ENCODE measurements at regions of chr1 and their contacts with region 1.

Region 1: GRCh38 chr1:213435715-213436114 is 384.7 kb downstream of the RPS6KC1 start:
- DNase-seq: no peak
- H3K4me3 ChIP-seq: no peak overlapping the region
- H3K27ac ChIP-seq: no peak overlapping the region
- H3K4me1 ChIP-seq: no peaks in the 10 kb centered on the region
- H3K27me3 ChIP-seq: peaks cover 1% of the 10 kb centered on the region
- CTCF ChIP-seq: no peak

Region 2: DNA sequence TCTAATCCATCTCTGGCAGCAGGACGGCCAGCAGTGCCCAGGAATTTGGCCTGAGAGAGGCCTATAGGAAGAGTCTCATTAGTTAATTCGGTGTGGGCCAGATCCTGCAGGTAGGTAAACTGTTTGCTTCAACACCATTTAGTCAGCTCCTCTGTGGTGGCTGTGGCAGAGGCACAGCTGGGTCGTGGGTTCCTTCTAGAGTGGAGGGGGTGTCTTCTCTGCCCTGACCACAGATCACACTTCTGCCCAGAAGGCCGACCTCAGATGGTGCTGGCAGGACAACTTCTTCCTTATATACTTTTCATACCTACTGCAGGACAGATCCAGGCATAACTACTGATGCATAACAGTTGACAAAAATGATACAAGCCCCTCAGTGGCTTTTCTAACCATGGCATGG is 103.2 kb before region 1 on chr1:
- CTCF ChIA-PET with region 1: no interaction called
- dilution Hi-C with region 1: no loop called
- in situ Hi-C with region 1: no loop called
- intact Hi-C with region 1: no loop called
- DNase-seq: no peak
- H3K4me3 ChIP-seq: no peak overlapping the region
- H3K27ac ChIP-seq: no peak overlapping the region
- H3K4me1 ChIP-seq: peaks cover 3% of the 10 kb centered on the region
- H3K27me3 ChIP-seq: no peaks in the 10 kb centered on the region
- CTCF ChIP-seq: no peak

Region 3: DNA sequence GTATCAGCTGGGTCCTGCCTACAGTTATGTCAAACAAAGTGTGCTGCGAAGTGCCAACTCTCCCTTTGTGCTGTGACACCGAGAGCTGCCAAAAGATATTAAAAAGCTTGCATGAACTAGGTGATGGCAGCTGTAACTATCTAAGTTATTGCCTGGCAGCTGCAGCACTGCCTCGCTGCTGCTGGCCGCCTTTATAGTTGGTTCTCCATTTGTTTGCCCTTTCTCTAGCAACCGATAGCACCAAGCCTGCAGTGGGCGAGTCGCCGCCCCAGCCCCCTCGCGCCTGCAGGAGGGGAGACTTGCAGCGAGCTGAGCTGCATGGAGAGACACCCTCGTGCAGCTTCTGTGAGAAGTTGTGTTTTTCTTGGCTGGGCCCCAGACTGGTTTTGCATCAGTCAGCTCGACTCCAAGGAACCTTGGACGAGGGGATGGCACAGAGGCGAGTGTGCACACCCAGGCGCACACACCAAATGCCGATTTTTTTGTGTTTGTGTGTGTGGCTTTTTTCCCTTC is 54.1 kb before region 1 on chr1:
- CTCF ChIA-PET with region 1: no interaction called
- dilution Hi-C with region 1: no loop called
- in situ Hi-C with region 1: no loop called
- intact Hi-C with region 1: no loop called
- DNase-seq: no peak
- H3K4me3 ChIP-seq: no peak overlapping the region
- H3K27ac ChIP-seq: no peak overlapping the region
- H3K4me1 ChIP-seq: no peaks in the 10 kb centered on the region
- H3K27me3 ChIP-seq: peaks cover 2% of the 10 kb centered on the region
- CTCF ChIP-seq: no peak

Region 4: GRCh38 chr1:213474054-213474453 is 38.3 kb after region 1 on chr1:
- CTCF ChIA-PET with region 1: no interaction called
- dilution Hi-C with region 1: loop called (anchors 5 kb)
- in situ Hi-C with region 1: no loop called
- intact Hi-C with region 1: no loop called
- DNase-seq: no peak
- H3K4me3 ChIP-seq: no peak overlapping the region
- H3K27ac ChIP-seq: no peak overlapping the region
- H3K4me1 ChIP-seq: no peaks in the 10 kb centered on the region
- H3K27me3 ChIP-seq: peaks cover 4% of the 10 kb centered on the region
- CTCF ChIP-seq: no peak

Region 5: GRCh38 chr1:213669964-213670691 is 234.4 kb after region 1 on chr1:
- CTCF ChIA-PET with region 1: no interaction called
- dilution Hi-C with region 1: no loop called
- in situ Hi-C with region 1: no loop called
- intact Hi-C with region 1: no loop called
- DNase-seq: no peak
- H3K4me3 ChIP-seq: no peak overlapping the region
- H3K27ac ChIP-seq: no peak overlapping the region
- H3K4me1 ChIP-seq: no peaks in the 10 kb centered on the region
- H3K27me3 ChIP-seq: no peaks in the 10 kb centered on the region
- CTCF ChIP-seq: no peak